B cell (primary cell): ENCODE measurements at regions of chr14 and their contacts with region 1.

Region 1: DNA sequence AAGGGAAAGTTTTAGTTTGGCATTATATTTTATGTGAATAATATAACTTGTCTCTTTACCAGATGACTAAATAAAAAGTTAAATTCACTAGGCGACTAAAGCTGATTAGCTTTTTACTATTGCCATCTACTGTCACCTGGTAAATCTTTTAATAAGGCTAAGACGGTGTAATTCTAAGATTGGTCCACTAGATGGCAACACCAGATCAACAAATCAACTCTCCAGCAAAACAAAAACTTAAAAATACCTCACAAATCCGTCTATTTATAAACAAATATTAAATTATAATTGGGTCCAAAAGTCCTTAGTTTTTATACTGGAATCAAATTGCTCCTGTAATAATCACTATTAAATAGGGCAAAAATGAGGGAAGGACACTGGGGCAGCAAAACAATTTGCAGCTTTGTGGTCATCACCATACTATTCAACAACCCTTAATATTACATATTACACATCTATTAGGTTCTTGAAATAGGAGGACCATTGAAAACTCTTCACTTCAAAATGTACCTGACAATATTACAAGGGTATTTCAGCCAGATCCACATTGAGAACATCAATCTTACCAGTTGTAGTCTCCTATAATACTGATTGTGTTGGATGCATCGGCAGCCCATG is 47.9 kb downstream of the GALC start:
- DNase-seq: peak; percentile 68
- ATAC-seq: peak; percentile 58
- H3K4me3 ChIP-seq: no peak overlapping the region
- H3K4me3 Mint-ChIP-seq: no peak overlapping the region
- H3K27ac ChIP-seq: no peak overlapping the region
- H3K27ac Mint-ChIP-seq: no peak overlapping the region
- H3K4me1 ChIP-seq: no peaks in the 10 kb centered on the region
- H3K4me1 Mint-ChIP-seq: no peaks in the 10 kb centered on the region
- H3K27me3 ChIP-seq: no peaks in the 10 kb centered on the region
- H3K27me3 Mint-ChIP-seq: no peaks in the 10 kb centered on the region
- CTCF ChIP-seq: peak; percentile 89

Region 2: DNA sequence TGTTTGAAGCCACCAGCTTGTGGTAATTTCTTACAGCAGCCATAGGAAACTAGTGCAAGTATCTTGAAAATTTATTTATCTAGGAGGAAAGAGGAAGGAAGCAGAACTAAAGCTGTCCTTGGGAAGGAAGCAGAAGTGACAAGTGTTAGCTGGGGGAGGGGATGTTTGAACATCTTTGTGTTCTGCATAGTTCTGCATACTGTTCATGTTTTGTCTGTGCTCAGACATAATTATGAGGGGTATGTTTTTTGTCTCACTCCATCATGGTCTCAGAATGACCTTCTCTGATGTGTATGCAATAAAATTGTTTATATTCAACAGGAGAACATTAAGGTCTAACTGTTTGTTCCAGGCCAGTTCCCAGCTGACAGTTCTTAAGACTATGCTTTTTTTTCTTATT is 558.6 kb before region 1 on chr14:
- CTCF ChIA-PET with region 1: no interaction called
- POLR2A ChIA-PET with region 1: no interaction called
- intact Hi-C with region 1: no loop called
- DNase-seq: no peak
- ATAC-seq: no peak
- H3K4me3 ChIP-seq: no peak overlapping the region
- H3K4me3 Mint-ChIP-seq: no peak overlapping the region
- H3K27ac ChIP-seq: no peak overlapping the region
- H3K27ac Mint-ChIP-seq: no peak overlapping the region
- H3K4me1 ChIP-seq: no peaks in the 10 kb centered on the region
- H3K4me1 Mint-ChIP-seq: no peaks in the 10 kb centered on the region
- H3K27me3 ChIP-seq: no peaks in the 10 kb centered on the region
- H3K27me3 Mint-ChIP-seq: no peaks in the 10 kb centered on the region
- CTCF ChIP-seq: no peak

Region 3: DNA sequence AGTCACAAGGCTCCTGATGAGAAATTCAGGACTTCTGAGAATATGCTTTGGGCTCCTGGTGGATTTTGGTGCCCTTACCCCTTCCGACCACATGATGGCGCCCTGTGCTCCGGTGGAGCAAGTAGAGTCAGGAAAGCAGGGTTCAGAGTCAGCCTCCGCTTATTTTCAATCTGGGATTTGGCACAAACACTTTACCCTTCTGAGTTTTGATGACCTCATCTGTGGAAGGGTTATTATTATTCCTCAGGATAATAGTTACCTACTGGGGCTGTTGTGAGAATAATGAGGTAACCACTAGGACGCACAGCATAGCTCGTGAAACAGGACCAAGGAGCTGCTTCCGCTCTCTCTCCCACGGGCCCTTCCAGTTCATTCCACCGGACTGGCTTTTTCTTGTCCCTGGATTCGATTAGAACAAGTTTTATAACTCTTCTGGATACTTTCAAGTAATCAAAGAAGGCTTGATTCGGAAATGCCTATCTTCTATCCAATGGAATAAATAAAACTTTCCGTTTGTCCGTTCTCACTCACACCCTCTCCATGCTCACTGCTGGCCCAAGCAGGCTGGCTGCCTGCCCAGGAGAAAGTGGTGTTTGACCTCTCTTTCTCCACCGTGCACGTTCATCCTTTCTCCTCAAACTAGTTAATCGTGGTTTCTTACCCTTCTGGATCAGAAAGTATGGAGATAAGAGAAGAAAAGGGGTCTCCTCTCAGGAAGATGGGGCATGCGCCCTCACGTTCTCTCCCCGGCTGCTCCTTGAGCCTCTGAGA is 56.7 kb before region 1 on chr14:
- CTCF ChIA-PET with region 1: no interaction called
- POLR2A ChIA-PET with region 1: no interaction called
- intact Hi-C with region 1: no loop called
- DNase-seq: no peak
- ATAC-seq: no peak
- H3K4me3 ChIP-seq: no peak overlapping the region
- H3K4me3 Mint-ChIP-seq: no peak overlapping the region
- H3K27ac ChIP-seq: no peak overlapping the region
- H3K27ac Mint-ChIP-seq: no peak overlapping the region
- H3K4me1 ChIP-seq: no peaks in the 10 kb centered on the region
- H3K4me1 Mint-ChIP-seq: no peaks in the 10 kb centered on the region
- H3K27me3 ChIP-seq: peaks cover 0 to 10% (median 1%) of the 10 kb centered on the region in 4 experiments
- H3K27me3 Mint-ChIP-seq: peaks cover 17% of the 10 kb centered on the region
- CTCF ChIP-seq: peak; percentile 24

Region 4: GRCh38 chr14:88013750-88014349 is 68.8 kb after region 1 on chr14:
- CTCF ChIA-PET with region 1: interaction called, 63 read pairs
- POLR2A ChIA-PET with region 1: no interaction called
- intact Hi-C with region 1: loop called (anchors 1 kb)
- DNase-seq: peak; percentile 72
- ATAC-seq: peak; percentile 86
- H3K4me3 ChIP-seq: no peak overlapping the region
- H3K4me3 Mint-ChIP-seq: no peak overlapping the region
- H3K27ac ChIP-seq: no peak overlapping the region
- H3K27ac Mint-ChIP-seq: no peak overlapping the region
- H3K4me1 ChIP-seq: peaks cover 2 to 13% of the 10 kb centered on the region in 2 donors
- H3K4me1 Mint-ChIP-seq: peaks cover 44% of the 10 kb centered on the region
- H3K27me3 ChIP-seq: no peaks in the 10 kb centered on the region
- H3K27me3 Mint-ChIP-seq: no peaks in the 10 kb centered on the region
- CTCF ChIP-seq: peak; percentile 84

Region 5: GRCh38 chr14:88189417-88190191 is 244.5 kb after region 1 on chr14:
- CTCF ChIA-PET with region 1: interaction called, 61 read pairs
- POLR2A ChIA-PET with region 1: no interaction called
- intact Hi-C with region 1: no loop called
- DNase-seq: peak; percentile 68
- ATAC-seq: peak; percentile 67
- H3K4me3 ChIP-seq: peak overlapping the region in 2 of 5 experiments; percentile 27 to 28
- H3K4me3 Mint-ChIP-seq: peak overlapping the region; percentile 80
- H3K27ac ChIP-seq: no peak overlapping the region
- H3K27ac Mint-ChIP-seq: no peak overlapping the region
- H3K4me1 ChIP-seq: peaks cover 0 to 6% of the 10 kb centered on the region in 2 donors
- H3K4me1 Mint-ChIP-seq: peaks cover 6% of the 10 kb centered on the region
- H3K27me3 ChIP-seq: peaks cover 0 to 7% (median 2%) of the 10 kb centered on the region in 4 experiments
- H3K27me3 Mint-ChIP-seq: peaks cover 21% of the 10 kb centered on the region
- CTCF ChIP-seq: peak; percentile 76

Region 6: DNA sequence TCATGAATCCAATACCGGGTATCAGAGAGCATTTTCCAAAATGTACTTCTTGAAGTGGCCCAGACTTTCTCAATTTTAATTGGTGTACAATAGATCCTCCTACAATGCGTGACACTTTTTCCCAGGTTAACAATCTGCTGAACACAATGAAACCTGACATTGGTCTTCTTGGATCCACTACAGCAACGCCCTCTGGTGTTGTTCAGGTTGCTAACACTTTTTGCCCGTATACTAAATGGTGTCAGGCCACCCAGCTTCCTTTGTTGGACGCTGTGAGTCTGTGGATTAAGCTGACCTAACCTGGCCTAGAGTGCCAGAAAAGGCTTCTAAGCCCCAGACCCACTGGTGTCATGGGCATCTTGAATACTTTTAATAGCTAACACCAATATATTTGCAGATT is 288.8 kb after region 1 on chr14:
- CTCF ChIA-PET with region 1: interaction called, 18 read pairs
- POLR2A ChIA-PET with region 1: no interaction called
- intact Hi-C with region 1: loop called (anchors 1 kb)
- DNase-seq: peak; percentile 9
- ATAC-seq: no peak
- H3K4me3 ChIP-seq: no peak overlapping the region
- H3K4me3 Mint-ChIP-seq: no peak overlapping the region
- H3K27ac ChIP-seq: no peak overlapping the region
- H3K27ac Mint-ChIP-seq: no peak overlapping the region
- H3K4me1 ChIP-seq: no peaks in the 10 kb centered on the region
- H3K4me1 Mint-ChIP-seq: no peaks in the 10 kb centered on the region
- H3K27me3 ChIP-seq: peaks cover 0 to 3% (median 0%) of the 10 kb centered on the region in 4 experiments
- H3K27me3 Mint-ChIP-seq: peaks cover 17% of the 10 kb centered on the region
- CTCF ChIP-seq: peak; percentile 31

Region 7: GRCh38 chr14:88385345-88386101 is 440.4 kb after region 1 on chr14 and contains the start of gene SPATA7:
- CTCF ChIA-PET with region 1: interaction called, 17 read pairs
- POLR2A ChIA-PET with region 1: no interaction called
- intact Hi-C with region 1: loop called (anchors 5 kb)
- DNase-seq: peak; percentile 82
- ATAC-seq: peak; percentile 92
- H3K4me3 ChIP-seq: peak within 1 kb of the TSS; percentile 81 to 95 (median 93)
- H3K4me3 Mint-ChIP-seq: peak within 1 kb of the TSS; percentile 98
- H3K27ac ChIP-seq: peak within 1 kb of the TSS; percentile 38 to 67
- H3K27ac Mint-ChIP-seq: peak within 1 kb of the TSS; percentile 78
- H3K4me1 ChIP-seq: peaks cover 6 to 13% of the 10 kb centered on the region in 2 donors
- H3K4me1 Mint-ChIP-seq: peaks cover 20% of the 10 kb centered on the region
- H3K27me3 ChIP-seq: peaks cover 0 to 4% (median 0%) of the 10 kb centered on the region in 4 experiments
- H3K27me3 Mint-ChIP-seq: peaks cover 3% of the 10 kb centered on the region
- CTCF ChIP-seq: no peak
- total RNA-seq, gene SPATA7: 3.2 and 3.3 TPM in 2 replicates

Region 8: DNA sequence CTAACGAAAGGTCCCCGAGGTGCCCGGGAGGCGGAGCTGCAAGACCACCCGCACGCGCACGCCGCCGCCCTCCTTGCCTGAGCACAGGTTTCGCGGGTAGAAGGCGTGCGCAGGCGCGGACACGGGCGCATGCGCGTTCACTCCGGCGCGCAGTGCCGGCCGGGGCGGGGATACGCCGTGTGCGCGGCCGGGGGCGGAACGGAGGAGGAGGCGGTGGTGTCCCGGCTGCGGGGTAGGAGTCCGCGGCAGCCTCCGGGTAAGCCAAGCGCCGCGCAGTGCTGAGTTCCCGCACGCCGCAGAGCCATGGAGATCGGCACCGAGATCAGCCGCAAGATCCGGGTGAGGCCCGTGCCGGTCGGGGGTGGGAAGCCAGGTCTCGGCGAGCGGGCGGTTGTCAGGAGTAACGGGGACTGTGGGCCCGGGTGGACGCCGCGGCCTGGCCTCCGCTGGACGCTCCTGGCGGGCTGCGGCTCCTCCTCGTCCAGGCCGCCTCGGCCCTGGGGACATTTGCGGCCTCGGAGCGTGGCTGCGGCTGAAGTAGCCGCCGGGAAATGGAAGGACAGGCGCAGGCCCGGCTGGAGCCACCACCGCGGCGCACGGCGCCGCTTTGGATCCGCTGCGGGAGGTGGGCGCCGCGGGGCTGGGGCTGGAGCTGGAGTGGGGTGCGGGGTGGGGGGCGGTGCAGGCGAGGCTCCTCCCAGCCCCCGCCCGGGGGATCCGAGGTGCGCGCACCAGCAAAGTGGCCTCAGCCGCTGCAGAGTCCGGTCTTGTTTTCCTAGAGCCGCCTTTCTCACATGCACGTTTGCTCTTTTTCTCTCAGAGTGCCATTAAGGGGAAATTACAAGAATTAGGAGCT is 618.0 kb after region 1 on chr14 and contains the start of gene ZC3H14:
- CTCF ChIA-PET with region 1: no interaction called
- POLR2A ChIA-PET with region 1: no interaction called
- intact Hi-C with region 1: loop called (anchors 5 kb)
- DNase-seq: peak; percentile 93
- ATAC-seq: peak; percentile 95
- H3K4me3 ChIP-seq: peak within 1 kb of the TSS; percentile 63 to 93 (median 86)
- H3K4me3 Mint-ChIP-seq: peak within 1 kb of the TSS; percentile 94
- H3K27ac ChIP-seq: peak within 1 kb of the TSS; percentile 48 to 75
- H3K27ac Mint-ChIP-seq: peak within 1 kb of the TSS; percentile 90
- H3K4me1 ChIP-seq: peaks cover 12 to 14% of the 10 kb centered on the region in 2 donors
- H3K4me1 Mint-ChIP-seq: peaks cover 20% of the 10 kb centered on the region
- H3K27me3 ChIP-seq: peaks cover 0 to 13% (median 3%) of the 10 kb centered on the region in 4 experiments
- H3K27me3 Mint-ChIP-seq: peaks cover 13% of the 10 kb centered on the region
- CTCF ChIP-seq: no peak
- total RNA-seq, gene ZC3H14: 47.0 and 48.0 TPM in 2 replicates